ENCODE measurements at regions of chr5 and their contacts with region 1.

Region 1: DNA sequence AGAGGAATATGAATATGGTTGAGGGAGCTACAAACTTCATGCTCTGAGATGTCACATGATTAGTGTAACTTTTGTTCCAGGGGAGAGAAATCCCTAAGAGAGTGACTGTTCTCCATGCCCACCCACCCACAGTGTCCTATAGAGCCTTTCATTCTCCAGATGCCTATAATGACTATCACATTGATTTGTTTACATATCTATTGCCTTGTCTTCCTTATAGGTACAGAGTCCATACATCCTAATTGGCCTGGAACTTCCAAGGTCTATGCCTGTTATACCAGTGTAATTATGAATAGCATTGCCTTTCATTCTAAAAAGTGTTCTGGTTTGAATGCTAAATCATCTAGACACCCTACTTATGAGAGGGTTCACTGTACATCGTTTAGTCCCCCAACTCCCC is 475.4 kb downstream of the RAB3C start:
- DNase-seq: no peak
- H3K4me3 ChIP-seq: no peak overlapping the region
- H3K27ac ChIP-seq: no peak overlapping the region
- H3K4me1 ChIP-seq: no peaks in the 10 kb centered on the region
- H3K27me3 ChIP-seq: no peaks in the 10 kb centered on the region
- CTCF ChIP-seq: no peak
- POLR2A ChIP-seq: no peak

Region 2: GRCh38 chr5:59027145-59027907 is 30.9 kb before region 1 on chr5:
- CTCF ChIA-PET with region 1: no interaction called
- POLR2A ChIA-PET with region 1: no interaction called
- dilution Hi-C with region 1: no loop called
- intact Hi-C with region 1: no loop called
- DNase-seq: no peak
- H3K4me3 ChIP-seq: no peak overlapping the region
- H3K27ac ChIP-seq: no peak overlapping the region
- H3K4me1 ChIP-seq: no peaks in the 10 kb centered on the region
- H3K27me3 ChIP-seq: no peaks in the 10 kb centered on the region
- CTCF ChIP-seq: no peak
- POLR2A ChIP-seq: no peak

Region 3: GRCh38 chr5:59039296-59040023 is 18.8 kb before region 1 on chr5:
- CTCF ChIA-PET with region 1: interaction called, 10 read pairs
- POLR2A ChIA-PET with region 1: no interaction called
- dilution Hi-C with region 1: no loop called
- intact Hi-C with region 1: no loop called
- DNase-seq: peak; percentile 77
- H3K4me3 ChIP-seq: peak overlapping the region; percentile 57 to 81 (median 60)
- H3K27ac ChIP-seq: peak overlapping the region; percentile 14
- H3K4me1 ChIP-seq: peaks cover 40% of the 10 kb centered on the region
- H3K27me3 ChIP-seq: no peaks in the 10 kb centered on the region
- CTCF ChIP-seq: no peak
- POLR2A ChIP-seq: no peak

Measured in endothelial cell of umbilical vein (primary cell).